ENCODE measurements at regions of chr11 and their contacts with region 1.

Region 1: GRCh38 chr11:62542750-62543567 is 3.6 kb downstream of the AHNAK start:
- DNase-seq: peak; percentile 84
- ATAC-seq: peak; percentile 67
- H3K4me3 Mint-ChIP-seq: peak overlapping the region; percentile 83
- H3K27ac Mint-ChIP-seq: peak overlapping the region; percentile 58
- H3K4me1 Mint-ChIP-seq: peaks cover 80% of the 10 kb centered on the region
- H3K27me3 Mint-ChIP-seq: peaks cover 3% of the 10 kb centered on the region

Region 2: GRCh38 chr11:62266558-62266957 is 276.4 kb before region 1 on chr11:
- CTCF ChIA-PET with region 1: no interaction called
- POLR2A ChIA-PET with region 1: no interaction called
- intact Hi-C with region 1: no loop called
- DNase-seq: peak; percentile 54
- ATAC-seq: peak; percentile 88
- H3K4me3 Mint-ChIP-seq: no peak overlapping the region
- H3K27ac Mint-ChIP-seq: peak overlapping the region; percentile 52
- H3K4me1 Mint-ChIP-seq: peaks cover 36% of the 10 kb centered on the region
- H3K27me3 Mint-ChIP-seq: peaks cover 20% of the 10 kb centered on the region

Region 3: GRCh38 chr11:62383822-62384221 is 159.1 kb before region 1 on chr11:
- CTCF ChIA-PET with region 1: interaction called, 3 read pairs
- POLR2A ChIA-PET with region 1: no interaction called
- intact Hi-C with region 1: loop called in 1 of 2 experiments (anchors 5 kb)
- DNase-seq: no peak
- ATAC-seq: no peak
- H3K4me3 Mint-ChIP-seq: no peak overlapping the region
- H3K27ac Mint-ChIP-seq: no peak overlapping the region
- H3K4me1 Mint-ChIP-seq: peaks cover 10% of the 10 kb centered on the region
- H3K27me3 Mint-ChIP-seq: no peaks in the 10 kb centered on the region

Region 4: DNA sequence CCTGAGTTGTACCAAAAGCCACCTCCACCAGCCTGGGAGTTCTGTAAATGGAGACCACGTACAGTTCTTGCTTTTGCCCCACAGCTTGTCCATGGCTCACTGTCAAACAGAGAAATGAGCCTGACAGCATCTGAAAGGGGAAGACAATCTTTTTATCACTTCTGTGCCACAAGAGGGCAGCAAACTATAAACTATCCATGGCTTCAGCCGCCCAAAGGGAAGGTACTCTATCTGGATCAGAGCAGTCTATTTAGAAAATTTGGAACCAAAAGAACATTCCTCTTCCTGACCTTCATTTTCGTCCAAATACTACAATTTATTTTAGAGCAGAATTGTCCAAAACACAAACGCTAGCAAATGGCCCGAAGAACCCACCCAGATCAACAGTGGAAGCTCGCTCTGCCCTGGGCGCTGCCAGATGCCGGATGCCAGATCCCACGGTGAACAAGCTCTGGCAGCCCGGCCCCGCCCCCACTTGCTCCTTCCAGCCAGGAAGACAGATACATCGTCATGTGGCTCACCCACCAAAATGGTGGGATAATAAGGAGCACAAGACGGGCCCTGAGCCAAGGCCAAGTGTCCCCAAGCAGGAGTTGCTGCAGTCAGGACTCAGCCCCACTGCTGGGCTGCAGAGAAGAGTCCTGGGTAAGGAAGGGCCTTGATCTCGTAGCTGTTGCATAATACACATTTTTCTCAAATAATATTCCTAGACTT is 148.0 kb before region 1 on chr11:
- CTCF ChIA-PET with region 1: interaction called, 8 read pairs
- POLR2A ChIA-PET with region 1: no interaction called
- intact Hi-C with region 1: loop called in 1 of 2 experiments (anchors 5 kb)
- DNase-seq: peak; percentile 55
- ATAC-seq: peak; percentile 91
- H3K4me3 Mint-ChIP-seq: no peak overlapping the region
- H3K27ac Mint-ChIP-seq: no peak overlapping the region
- H3K4me1 Mint-ChIP-seq: peaks cover 12% of the 10 kb centered on the region
- H3K27me3 Mint-ChIP-seq: no peaks in the 10 kb centered on the region

Region 5: DNA sequence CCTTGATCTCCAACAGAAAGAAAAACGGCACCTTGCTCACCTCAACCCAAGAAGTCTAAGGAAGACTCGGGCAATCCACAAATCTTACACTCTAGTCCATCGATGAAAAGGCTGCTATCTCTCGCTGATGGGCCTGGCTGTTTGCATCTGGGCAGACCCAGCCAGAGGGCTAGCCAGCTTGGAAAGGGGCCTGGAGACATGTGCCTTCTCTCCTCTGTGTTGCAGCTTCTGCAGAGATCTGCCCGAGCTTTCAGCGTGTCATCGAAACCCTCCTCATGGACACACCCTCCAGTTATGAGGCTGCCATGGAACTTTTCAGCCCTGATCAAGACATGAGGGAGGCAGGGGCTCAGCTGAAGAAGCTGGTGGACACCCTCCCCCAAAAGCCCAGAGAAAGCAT is 121.0 kb before region 1 on chr11:
- CTCF ChIA-PET with region 1: interaction called, 60 read pairs
- POLR2A ChIA-PET with region 1: interaction called, 6 read pairs
- intact Hi-C with region 1: loop called (anchors 1 to 5 kb)
- DNase-seq: no peak
- ATAC-seq: no peak
- H3K4me3 Mint-ChIP-seq: no peak overlapping the region
- H3K27ac Mint-ChIP-seq: no peak overlapping the region
- H3K4me1 Mint-ChIP-seq: peaks cover 8% of the 10 kb centered on the region
- H3K27me3 Mint-ChIP-seq: no peaks in the 10 kb centered on the region

Region 6: DNA sequence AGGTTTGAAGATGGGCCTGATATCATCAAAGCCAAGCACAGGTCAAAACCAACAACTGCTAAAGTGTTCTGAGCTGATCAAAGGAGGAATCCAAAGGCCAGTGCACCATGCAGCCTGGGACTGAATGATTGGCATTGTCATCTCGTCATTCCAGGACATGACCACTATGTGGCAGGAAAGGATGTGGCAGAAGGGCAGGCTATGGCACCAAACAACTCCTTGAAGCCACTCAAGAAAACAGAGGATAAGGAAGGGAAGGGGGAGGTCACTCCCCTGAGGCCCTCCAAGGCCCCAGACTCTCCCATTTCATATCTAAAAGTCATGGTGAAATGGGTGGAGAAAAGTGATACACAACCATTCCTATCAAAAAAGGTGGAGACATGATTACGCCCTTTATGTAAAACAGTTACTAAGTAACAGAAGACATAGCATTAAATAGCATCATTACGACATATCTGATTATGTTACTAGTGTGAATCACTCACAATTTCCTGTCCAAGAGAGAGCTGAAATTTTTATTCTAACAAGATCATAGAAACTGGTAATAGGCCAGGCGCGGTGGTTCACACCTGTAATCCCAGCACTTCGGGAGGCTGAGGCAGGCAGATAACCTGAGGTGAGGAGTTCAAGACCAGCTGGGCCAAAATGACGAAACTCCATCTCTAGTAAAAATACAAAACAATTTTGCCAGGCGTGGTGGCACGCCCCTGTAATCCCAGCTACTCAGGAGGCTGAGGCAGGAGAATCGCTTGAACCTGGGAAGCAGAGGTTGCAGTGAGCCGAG is 45.6 kb before region 1 on chr11:
- CTCF ChIA-PET with region 1: interaction called, 11 read pairs
- POLR2A ChIA-PET with region 1: no interaction called
- intact Hi-C with region 1: loop called (anchors 2 to 5 kb)
- DNase-seq: peak; percentile 53
- ATAC-seq: peak; percentile 81
- H3K4me3 Mint-ChIP-seq: no peak overlapping the region
- H3K27ac Mint-ChIP-seq: no peak overlapping the region
- H3K4me1 Mint-ChIP-seq: peaks cover 3% of the 10 kb centered on the region
- H3K27me3 Mint-ChIP-seq: peaks cover 4% of the 10 kb centered on the region

Region 7: DNA sequence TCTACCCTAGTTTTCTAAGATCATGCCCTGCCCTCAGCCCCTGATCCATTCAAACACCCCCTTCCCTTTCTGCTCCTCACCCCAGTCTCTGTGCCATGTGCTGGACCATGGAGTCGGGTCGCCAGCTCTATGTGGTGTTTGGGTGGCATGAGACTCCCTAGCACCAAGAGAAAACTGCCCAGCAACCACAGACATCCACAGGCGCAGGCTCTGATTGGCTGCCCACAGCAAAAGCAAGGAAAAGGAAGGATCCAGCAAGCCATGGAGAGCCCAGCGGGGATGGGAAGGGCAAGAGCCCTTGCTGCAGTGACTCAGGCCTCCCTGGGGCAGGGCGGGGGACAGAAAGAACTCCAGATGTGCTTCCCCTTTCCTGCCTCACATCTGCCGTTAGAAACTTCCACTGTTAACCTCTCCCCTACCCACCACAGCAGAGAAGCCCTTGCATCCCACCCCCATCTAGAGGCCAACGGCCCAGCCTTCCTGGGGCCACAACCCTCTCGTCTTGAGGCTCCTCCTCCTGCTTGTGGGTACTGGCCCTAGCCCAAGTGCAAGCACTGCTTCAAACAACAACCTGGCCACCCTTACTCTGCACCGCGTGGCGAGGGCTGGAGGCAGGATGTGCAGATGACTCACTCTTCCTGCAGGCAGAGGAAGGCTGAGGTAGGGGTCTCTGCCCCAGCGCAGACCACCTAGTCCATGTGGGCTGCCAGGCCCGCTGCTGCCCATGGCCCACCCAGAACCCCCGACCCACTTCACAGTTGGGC is 13.3 kb after region 1 on chr11:
- CTCF ChIA-PET with region 1: interaction called, 32 read pairs
- POLR2A ChIA-PET with region 1: interaction called, 26 read pairs
- intact Hi-C with region 1: loop called in 1 of 2 experiments (anchors 1 kb)
- DNase-seq: peak; percentile 92
- ATAC-seq: peak; percentile 65
- H3K4me3 Mint-ChIP-seq: peak overlapping the region; percentile 54
- H3K27ac Mint-ChIP-seq: peak overlapping the region; percentile 92
- H3K4me1 Mint-ChIP-seq: peaks cover 98% of the 10 kb centered on the region
- H3K27me3 Mint-ChIP-seq: no peaks in the 10 kb centered on the region

Measured in activated CD4-positive, alpha-beta T cell treated with anti-CD3 and anti-CD28 coated beads for 36 hours (primary cell).